Dorsolateral prefrontal cortex (tissue), 120 donors: ENCODE measurements at regions of chr3 and their contacts with region 1.

Region 1: DNA sequence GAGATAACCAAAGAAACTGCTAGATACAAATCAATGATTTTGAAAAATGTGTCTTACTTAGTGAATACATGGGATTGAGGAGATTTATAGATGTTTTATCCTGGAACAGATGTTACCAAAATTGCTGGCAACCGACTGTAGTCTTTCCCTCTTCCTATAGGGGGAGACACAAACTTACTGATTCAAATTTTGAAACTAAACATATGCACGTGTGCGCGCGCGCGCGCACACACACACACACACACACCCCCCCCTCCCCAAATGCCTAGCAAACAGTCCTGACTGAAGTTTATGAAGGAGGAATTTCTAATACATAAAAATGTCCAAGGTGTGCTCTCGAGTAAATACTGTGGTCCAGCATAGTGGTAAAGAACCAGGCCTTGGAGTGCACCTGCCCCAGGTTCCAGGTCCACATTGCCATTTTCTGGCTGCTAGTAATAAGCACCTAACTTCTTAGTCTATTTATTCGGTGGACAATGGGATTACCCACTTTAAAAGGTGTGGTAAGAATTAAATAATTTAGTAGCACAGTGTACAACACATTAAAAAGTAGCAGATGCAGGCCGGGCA is 18.5 kb upstream of the C3orf62 start:
- DNase-seq: peak in 1 of 10 donors; percentile 17
- H3K4me3 ChIP-seq: no peak overlapping the region
- H3K27ac ChIP-seq: peak overlapping the region in 2 of 59 donors; percentile 75 to 85
- H3K27me3 ChIP-seq: no peaks in the 10 kb centered on the region
- CTCF ChIP-seq: peak; percentile 32 to 79 (median 65)

Region 2: DNA sequence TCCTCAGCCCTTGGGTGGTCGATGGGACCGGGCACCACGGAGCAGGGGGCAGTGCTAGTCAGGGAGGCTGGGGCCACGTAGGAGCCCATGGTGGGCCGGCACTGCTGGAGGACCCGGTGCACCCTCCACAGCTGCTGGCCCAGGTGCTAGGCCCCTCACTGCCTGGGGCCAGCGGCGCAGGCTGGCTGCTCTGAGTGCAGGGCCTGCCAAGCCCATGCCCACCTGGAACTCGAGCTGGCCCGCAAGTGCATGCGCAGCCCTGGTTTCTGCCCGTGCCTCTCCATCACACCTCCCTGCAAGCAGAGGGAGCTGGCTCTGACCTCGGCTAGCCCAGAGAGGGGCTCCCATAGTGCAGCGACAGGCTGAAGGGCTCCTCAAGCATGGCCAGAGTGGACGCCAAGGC is 82.0 kb before region 1 on chr3:
- intact Hi-C with region 1: no loop called
- DNase-seq: no peak
- H3K4me3 ChIP-seq: no peak overlapping the region
- H3K27ac ChIP-seq: no peak overlapping the region
- H3K27me3 ChIP-seq: no peaks in the 10 kb centered on the region
- CTCF ChIP-seq: no peak

Region 3: DNA sequence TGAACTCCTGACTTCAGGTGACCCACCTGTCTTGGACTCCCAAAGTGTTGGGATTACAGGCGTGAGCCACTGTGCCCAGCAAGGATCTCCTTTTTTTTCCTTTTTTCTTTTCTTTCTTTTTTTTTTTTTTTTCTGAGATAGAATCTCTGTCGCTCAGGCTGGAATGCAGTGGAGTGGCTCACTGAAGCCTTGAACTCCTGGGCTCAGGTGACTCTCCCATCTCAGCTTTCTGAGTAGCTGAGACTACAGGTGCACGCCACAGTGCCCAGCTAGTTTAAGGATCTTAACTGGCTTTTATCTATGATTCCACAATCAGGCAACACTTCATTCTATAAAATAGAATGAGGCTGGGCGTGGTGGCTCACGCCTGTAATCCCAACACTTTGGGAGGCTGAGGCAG is 149.8 kb after region 1 on chr3:
- intact Hi-C with region 1: loop called (anchors 2 to 10 kb)
- DNase-seq: no peak
- H3K4me3 ChIP-seq: no peak overlapping the region
- H3K27ac ChIP-seq: no peak overlapping the region
- H3K27me3 ChIP-seq: no peaks in the 10 kb centered on the region
- CTCF ChIP-seq: no peak

Region 4: DNA sequence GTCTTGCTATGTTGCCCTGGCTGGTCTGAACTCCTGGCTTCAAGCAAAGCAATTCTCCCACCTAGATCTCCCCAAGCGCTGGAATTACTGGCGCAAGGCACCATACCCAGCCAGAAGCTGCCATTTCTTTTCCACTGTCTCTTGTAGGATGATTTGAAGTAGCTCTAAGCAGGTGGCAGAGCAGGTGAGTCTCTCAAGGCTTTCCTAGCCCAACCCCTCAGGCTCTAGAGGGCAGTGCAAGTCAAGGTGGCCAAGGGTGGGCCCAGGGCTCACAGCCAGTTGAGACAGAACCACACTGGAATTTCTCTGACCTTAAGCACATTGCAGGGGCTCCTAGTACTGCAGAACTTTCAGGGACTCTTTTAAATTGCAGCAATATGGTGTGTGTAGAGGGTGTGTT is 158.9 kb after region 1 on chr3:
- intact Hi-C with region 1: loop called (anchors 2 to 10 kb)
- DNase-seq: no peak
- H3K4me3 ChIP-seq: no peak overlapping the region
- H3K27ac ChIP-seq: no peak overlapping the region
- H3K27me3 ChIP-seq: no peaks in the 10 kb centered on the region
- CTCF ChIP-seq: peak in 3 of 56 donors; percentile 11 to 17 (median 13)